ENCODE measurements at regions of chr19 and their contacts with region 1.

Region 1: DNA sequence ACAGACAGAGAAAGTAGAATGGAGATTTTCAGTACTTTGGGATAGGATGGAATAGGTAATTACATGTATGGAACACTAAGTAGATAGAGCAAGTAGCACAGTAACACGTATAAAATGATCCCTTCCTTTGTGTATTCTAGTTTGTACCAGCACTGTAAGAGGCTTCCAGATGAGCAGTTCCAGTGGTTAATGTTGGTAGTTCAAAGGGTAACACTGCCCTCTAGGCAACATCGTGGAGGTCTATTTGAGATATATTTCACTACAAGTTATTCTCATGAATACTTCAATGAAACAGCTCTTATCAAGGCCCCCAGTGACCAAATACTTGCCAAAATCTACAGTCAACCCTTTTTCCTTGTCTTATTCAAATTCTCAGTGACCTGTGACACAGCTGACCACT is 13.5 kb upstream of the ZNF563 start:
- DNase-seq: no peak
- H3K4me3 ChIP-seq: no peak overlapping the region
- H3K4me3 Mint-ChIP-seq: no peak overlapping the region
- H3K27ac Mint-ChIP-seq: no peak overlapping the region
- H3K4me1 ChIP-seq: no peaks in the 10 kb centered on the region
- H3K4me1 Mint-ChIP-seq: no peaks in the 10 kb centered on the region
- H3K27me3 ChIP-seq: no peaks in the 10 kb centered on the region
- H3K27me3 Mint-ChIP-seq: no peaks in the 10 kb centered on the region
- CTCF ChIP-seq: no peak

Region 2: GRCh38 chr19:12202250-12202649 is 144.6 kb before region 1 on chr19:
- CTCF ChIA-PET with region 1: no interaction called
- POLR2A ChIA-PET with region 1: no interaction called
- intact Hi-C with region 1: loop called (anchors 2 kb)
- DNase-seq: peak; percentile 21 to 39
- H3K4me3 ChIP-seq: no peak overlapping the region
- H3K4me3 Mint-ChIP-seq: no peak overlapping the region
- H3K27ac Mint-ChIP-seq: no peak overlapping the region
- H3K4me1 ChIP-seq: no peaks in the 10 kb centered on the region
- H3K4me1 Mint-ChIP-seq: no peaks in the 10 kb centered on the region
- H3K27me3 ChIP-seq: no peaks in the 10 kb centered on the region
- H3K27me3 Mint-ChIP-seq: no peaks in the 10 kb centered on the region
- CTCF ChIP-seq: no peak